Activated B cell treated with CpG ODN at 0.5 μM for 24 hours (primary cell): ENCODE measurements at regions of chr4 and their contacts with region 1.

Region 1: GRCh38 chr4:112231779-112232713 is at the start of gene AP1AR:
- DNase-seq: peak; percentile 91
- ATAC-seq: peak; percentile 73
- H3K4me3 Mint-ChIP-seq: peak within 1 kb of the TSS; percentile 100
- H3K27ac Mint-ChIP-seq: peak within 1 kb of the TSS; percentile 99
- H3K4me1 Mint-ChIP-seq: peaks cover 30% of the 10 kb centered on the region
- H3K27me3 Mint-ChIP-seq: peaks cover 1% of the 10 kb centered on the region
- CTCF ChIP-seq: no peak
- total RNA-seq, gene AP1AR: 20.1 and 24.3 TPM in 2 replicates

Region 2: GRCh38 chr4:112099701-112100297 is 132.2 kb before region 1 on chr4:
- CTCF ChIA-PET with region 1: interaction called, 20 read pairs
- POLR2A ChIA-PET with region 1: interaction called, 3 read pairs
- intact Hi-C with region 1: loop called (anchors 1 kb)
- DNase-seq: no peak
- ATAC-seq: peak; percentile 50
- H3K4me3 Mint-ChIP-seq: no peak overlapping the region
- H3K27ac Mint-ChIP-seq: no peak overlapping the region
- H3K4me1 Mint-ChIP-seq: no peaks in the 10 kb centered on the region
- H3K27me3 Mint-ChIP-seq: no peaks in the 10 kb centered on the region
- CTCF ChIP-seq: peak; percentile 52

Region 3: GRCh38 chr4:112253382-112254000 is 21.4 kb after region 1 on chr4:
- CTCF ChIA-PET with region 1: interaction called, 3 read pairs
- POLR2A ChIA-PET with region 1: no interaction called
- intact Hi-C with region 1: loop called (anchors 2 kb)
- DNase-seq: no peak
- ATAC-seq: peak; percentile 82
- H3K4me3 Mint-ChIP-seq: no peak overlapping the region
- H3K27ac Mint-ChIP-seq: no peak overlapping the region
- H3K4me1 Mint-ChIP-seq: peaks cover 5% of the 10 kb centered on the region
- H3K27me3 Mint-ChIP-seq: no peaks in the 10 kb centered on the region
- CTCF ChIP-seq: no peak

Region 4: GRCh38 chr4:112312610-112313239 is 80.7 kb after region 1 on chr4:
- CTCF ChIA-PET with region 1: no interaction called
- POLR2A ChIA-PET with region 1: interaction called, 7 read pairs
- intact Hi-C with region 1: loop called (anchors 2 kb)
- DNase-seq: no peak
- ATAC-seq: peak; percentile 87
- H3K4me3 Mint-ChIP-seq: no peak overlapping the region
- H3K27ac Mint-ChIP-seq: no peak overlapping the region
- H3K4me1 Mint-ChIP-seq: peaks cover 19% of the 10 kb centered on the region
- H3K27me3 Mint-ChIP-seq: no peaks in the 10 kb centered on the region
- CTCF ChIP-seq: no peak

Region 5: DNA sequence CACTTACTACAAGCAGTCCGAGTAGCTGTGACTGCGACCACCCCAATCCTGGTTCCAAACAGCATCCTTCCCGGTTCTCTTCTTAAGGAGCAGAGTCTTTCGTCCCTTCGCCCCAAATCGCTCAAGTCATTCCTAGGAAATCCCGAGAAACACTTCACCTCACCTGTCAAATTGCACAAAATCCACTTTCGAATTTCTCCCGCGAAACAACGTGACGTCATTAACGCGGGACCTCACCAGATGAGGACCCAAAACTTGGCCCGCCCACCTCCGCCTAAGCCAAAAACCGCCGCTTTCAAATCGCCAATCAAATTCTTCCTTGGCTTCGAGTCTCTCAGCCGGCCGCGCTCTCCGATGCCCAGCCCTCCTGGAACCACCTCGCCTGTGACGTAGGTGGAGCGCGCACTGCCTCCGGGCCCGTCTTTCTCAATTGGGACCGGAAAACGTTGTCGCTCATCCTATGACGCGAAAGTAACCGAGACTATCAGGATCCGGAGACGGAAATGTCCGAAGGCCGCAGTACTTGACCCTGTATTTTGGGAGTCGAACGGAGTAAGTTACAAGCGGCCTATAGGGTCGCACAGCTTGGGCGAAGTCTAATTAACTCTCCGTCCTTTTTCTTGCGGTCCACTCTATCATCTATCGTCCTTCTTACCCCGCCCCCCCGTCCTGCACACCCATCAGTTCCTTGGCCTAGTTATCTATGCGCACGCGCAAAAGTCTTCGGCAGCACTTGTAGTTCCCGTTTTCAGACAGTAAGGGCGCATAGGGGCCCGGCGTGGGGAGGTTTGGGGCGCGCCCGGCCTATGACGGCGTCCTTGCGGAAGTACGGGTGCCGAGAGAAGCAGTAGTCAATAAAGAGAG is 404.9 kb after region 1 on chr4 and contains the starts of genes LARP7 and ZGRF1:
- CTCF ChIA-PET with region 1: no interaction called
- POLR2A ChIA-PET with region 1: no interaction called
- intact Hi-C with region 1: loop called (anchors 1 kb)
- DNase-seq: peak; percentile 91
- ATAC-seq: peak; percentile 89
- H3K4me3 Mint-ChIP-seq: no peak within 1 kb of the TSS
- H3K27ac Mint-ChIP-seq: no peak within 1 kb of the TSS
- H3K4me1 Mint-ChIP-seq: peaks cover 22% of the 10 kb centered on the region
- H3K27me3 Mint-ChIP-seq: no peaks in the 10 kb centered on the region
- CTCF ChIP-seq: peak; percentile 67
- total RNA-seq, gene LARP7: 56.9 and 57.8 TPM in 2 replicates
- total RNA-seq, gene ZGRF1: 12.3 and 13.7 TPM in 2 replicates